ENCODE measurements at regions of chr20 and their contacts with region 1.

Region 1: GRCh38 chr20:35523298-35523888 is 6.1 kb downstream of the C20orf173 start:
- DNase-seq: peak in 1 of 2 experiments; percentile 77
- H3K4me3 ChIP-seq: no peak overlapping the region
- H3K4me3 Mint-ChIP-seq: no peak overlapping the region
- H3K27ac Mint-ChIP-seq: no peak overlapping the region
- H3K4me1 ChIP-seq: no peaks in the 10 kb centered on the region
- H3K4me1 Mint-ChIP-seq: no peaks in the 10 kb centered on the region
- H3K27me3 ChIP-seq: no peaks in the 10 kb centered on the region
- H3K27me3 Mint-ChIP-seq: no peaks in the 10 kb centered on the region
- CTCF ChIP-seq: peak; percentile 86 to 90

Region 2: DNA sequence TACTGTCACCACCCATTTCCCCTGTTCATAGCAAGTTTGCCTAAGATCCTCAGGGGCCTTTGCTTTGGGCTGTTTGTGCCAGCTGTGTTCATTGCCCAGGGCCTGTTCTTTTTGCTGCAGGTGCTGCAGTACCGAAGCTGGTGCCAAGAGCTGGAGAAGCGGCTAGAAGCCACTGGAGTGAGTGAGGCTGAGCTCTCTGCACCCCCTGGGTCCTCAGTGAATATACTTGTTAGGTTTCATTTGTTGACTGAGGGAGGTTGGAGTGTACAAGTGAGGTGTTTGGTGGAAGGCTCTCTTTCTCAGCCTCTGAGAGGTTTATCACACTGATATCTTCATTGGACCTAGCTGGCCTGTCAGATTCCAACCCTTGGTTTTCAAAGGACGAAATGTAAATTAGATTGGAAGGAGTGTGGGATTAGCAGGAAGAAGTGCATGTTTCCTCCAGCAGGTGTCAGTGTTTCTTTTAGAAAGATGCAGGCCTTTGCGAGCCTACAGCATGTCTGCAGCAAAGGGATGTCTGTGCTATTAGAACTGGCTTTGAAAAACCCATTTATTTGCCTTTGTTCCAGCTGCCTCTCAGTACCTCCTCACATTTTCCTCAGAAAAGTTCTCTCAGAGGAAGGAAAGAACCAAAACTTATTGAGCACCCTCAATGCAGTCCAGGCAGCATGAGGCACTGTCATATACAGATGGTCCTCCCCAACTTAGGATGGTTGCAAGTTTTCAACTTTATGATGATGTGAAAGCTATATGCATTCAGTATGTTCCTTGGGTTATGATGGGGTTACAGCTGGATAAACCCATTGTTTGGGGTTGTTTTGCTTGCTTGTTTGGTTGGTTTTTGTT is 59.7 kb before region 1 on chr20:
- CTCF ChIA-PET with region 1: interaction called, 7 read pairs
- POLR2A ChIA-PET with region 1: no interaction called
- intact Hi-C with region 1: loop called (anchors 1 kb)
- DNase-seq: peak; percentile 83 to 88
- H3K4me3 ChIP-seq: no peak overlapping the region
- H3K4me3 Mint-ChIP-seq: no peak overlapping the region
- H3K27ac Mint-ChIP-seq: no peak overlapping the region
- H3K4me1 ChIP-seq: peaks cover 13% of the 10 kb centered on the region
- H3K4me1 Mint-ChIP-seq: peaks cover 18% of the 10 kb centered on the region
- H3K27me3 ChIP-seq: no peaks in the 10 kb centered on the region
- H3K27me3 Mint-ChIP-seq: no peaks in the 10 kb centered on the region
- CTCF ChIP-seq: peak; percentile 96 to 97

Region 3: DNA sequence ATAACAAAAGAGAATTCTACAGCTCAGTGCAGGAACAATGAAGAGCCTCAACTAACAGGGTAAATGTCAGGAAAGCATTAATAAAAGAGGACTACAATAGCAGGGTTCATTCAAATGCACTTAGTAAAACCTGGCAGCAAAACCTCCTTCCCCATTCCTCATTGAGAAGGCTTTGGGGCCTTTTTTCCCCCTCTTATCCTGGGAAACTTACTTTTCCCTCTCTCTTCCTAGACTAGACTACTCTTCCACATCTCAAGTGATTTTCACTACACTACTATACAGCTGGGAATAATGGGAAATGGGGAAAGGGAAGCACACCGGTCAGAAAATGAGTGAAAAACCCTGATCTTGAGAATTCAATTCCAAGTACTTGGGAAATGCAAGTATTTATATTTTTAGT is 185.9 kb after region 1 on chr20:
- CTCF ChIA-PET with region 1: no interaction called
- POLR2A ChIA-PET with region 1: interaction called, 19 read pairs
- intact Hi-C with region 1: no loop called
- DNase-seq: no peak
- H3K4me3 ChIP-seq: no peak overlapping the region
- H3K4me3 Mint-ChIP-seq: no peak overlapping the region
- H3K27ac Mint-ChIP-seq: peak overlapping the region; percentile 4
- H3K4me1 ChIP-seq: no peaks in the 10 kb centered on the region
- H3K4me1 Mint-ChIP-seq: peaks cover 10% of the 10 kb centered on the region
- H3K27me3 ChIP-seq: no peaks in the 10 kb centered on the region
- H3K27me3 Mint-ChIP-seq: no peaks in the 10 kb centered on the region
- CTCF ChIP-seq: no peak

Measured in Caco-2 (cell line).